ENCODE measurements at regions of chr11 and their contacts with region 1.

Region 1: DNA sequence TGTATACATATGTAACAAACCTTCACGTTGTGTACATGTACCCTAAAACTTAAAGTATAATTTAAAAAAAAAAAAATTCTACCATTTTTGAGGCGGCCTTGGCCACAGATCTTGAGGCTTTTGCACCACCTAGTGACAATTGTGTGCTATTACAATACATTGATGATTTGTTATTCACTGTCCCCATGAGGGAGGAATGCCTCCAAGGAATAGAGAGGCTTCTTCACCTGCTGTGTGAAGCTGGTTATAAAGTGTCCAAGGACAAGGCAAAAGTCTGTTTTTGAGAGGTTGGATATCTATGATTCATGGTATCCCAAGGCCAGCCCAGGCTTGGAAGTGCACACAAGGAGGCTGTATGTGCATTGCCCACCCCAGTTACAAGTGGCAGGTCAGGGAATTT is 30.7 kb downstream of the SLC22A25 start:
- DNase-seq: peak; percentile 12
- CTCF ChIP-seq: peak; percentile 44

Region 2: DNA sequence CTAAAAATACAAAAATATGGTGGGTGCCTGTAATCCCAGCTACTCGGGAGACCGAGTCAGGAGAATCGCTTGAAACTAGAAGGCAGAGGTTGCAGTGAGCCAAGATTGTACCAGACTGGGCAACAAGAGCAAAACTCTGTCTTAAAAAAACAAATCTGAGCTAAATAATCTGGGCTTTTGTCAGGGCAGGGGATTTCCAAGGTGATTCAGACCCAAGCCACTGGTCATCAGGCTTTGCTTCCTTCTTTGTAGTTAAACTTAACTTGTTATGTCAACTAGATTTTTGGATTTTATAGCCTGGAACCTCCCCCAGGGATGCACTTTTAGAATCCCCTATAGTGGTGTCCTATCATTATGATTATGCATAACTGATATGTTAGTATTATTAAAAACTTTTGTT is 170.1 kb before region 1 on chr11:
- in situ Hi-C with region 1: loop called (anchors 25 kb)
- DNase-seq: no peak
- CTCF ChIP-seq: no peak